Motor neuron (in vitro differentiated cells): ENCODE measurements at regions of chr11 and their contacts with region 1.

Region 1: DNA sequence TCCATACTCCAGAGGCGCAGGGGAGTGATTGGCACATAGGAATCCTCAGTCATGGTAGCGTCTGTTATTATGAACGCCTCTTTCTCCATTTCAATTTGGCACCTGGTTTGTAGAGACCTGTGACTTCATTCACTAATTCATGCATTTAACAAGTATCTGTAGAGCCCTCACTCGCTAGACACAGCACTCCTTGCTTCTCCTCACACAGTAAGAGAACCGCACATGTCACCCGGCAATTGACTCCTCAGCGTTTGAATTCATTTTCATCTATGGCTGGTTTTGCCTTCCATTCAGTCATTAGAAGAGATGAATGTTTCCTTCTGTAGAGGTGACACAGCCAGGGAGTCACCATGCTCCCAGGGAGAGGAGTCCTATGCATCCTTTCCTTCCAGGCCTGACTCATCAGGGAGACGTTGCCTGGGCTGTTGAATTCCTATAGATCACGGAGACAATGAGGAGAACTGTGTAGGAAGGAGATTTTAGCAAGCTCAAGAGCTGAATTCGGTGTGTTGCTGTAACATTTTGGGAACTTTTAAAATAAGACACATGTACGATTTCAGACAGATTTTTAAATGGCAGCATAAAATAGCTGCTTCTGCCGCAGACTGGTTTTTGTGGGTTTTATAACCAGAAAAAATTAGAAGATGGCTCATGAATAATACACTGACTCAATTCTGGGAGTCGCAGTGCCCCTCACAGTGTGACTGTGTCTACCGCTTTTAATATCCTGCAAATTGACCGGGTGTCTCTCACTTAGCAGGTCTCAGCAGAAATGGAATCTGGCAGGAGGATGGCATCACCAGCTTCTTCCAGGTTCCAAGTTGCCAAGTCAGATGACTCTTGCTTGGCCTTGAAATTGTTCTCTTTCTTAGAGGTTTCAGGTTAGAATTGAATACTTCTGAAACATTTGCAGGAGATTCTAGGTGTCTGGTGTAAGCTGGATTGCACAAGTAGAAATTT is 44.4 kb upstream of the CLMP start:
- ATAC-seq: peak in 7 of 8 experiments; percentile 27 to 100 (median 99)
- H3K4me3 ChIP-seq: no peak overlapping the region
- H3K27ac ChIP-seq: peak overlapping the region in 1 of 2 donors; percentile 5
- H3K4me1 ChIP-seq: peaks cover 9 to 16% of the 10 kb centered on the region in 2 donors

Region 2: GRCh38 chr11:123110356-123110755 is 129.1 kb before region 1 on chr11:
- in situ Hi-C with region 1: loop called in 8 of 9 experiments (anchors 5 to 25 kb)
- ATAC-seq: no peak
- H3K4me3 ChIP-seq: no peak overlapping the region
- H3K27ac ChIP-seq: no peak overlapping the region
- H3K4me1 ChIP-seq: peaks cover 0 to 6% of the 10 kb centered on the region in 2 donors

Region 3: DNA sequence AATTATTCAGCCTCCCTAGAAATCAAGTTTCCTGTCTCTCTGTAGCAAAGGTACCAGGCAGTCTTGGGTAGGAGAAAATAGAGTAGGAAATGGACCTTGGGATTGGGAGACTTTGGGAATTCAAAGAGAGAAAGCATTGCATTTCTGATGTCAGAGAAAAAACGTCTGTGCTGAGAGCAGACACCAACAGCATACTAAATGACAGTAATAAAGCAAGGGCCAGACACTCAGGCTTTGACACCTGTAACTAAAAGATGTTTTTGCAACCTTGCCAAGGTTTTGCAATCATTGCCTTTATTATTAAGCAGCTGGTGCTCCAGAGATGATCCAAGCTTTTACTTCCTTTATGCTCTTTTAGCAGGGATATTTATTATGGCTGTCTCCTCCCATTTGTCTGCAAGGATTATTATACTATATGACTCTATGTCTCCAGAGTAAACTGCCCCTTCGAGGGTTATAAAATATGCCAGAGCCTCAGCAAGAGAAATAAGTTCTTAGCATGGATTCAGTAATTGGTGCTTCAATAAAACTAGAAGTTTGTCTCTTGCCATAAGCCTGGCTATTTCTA is 105.4 kb after region 1 on chr11:
- in situ Hi-C with region 1: no loop called
- ATAC-seq: peak in 5 of 8 experiments; percentile 63 to 93 (median 71)
- H3K4me3 ChIP-seq: no peak overlapping the region
- H3K27ac ChIP-seq: peak overlapping the region in 1 of 2 donors; percentile 61
- H3K4me1 ChIP-seq: peaks cover 11 to 40% of the 10 kb centered on the region in 2 donors